K562 (cell line): ENCODE measurements at regions of chr7 and their contacts with region 1.

Region 1: GRCh38 chr7:67705850-67706249 is 709.2 kb downstream of the TYW1 start:
- DNase-seq: no peak
- ATAC-seq: no peak
- H3K4me3 ChIP-seq: no peak overlapping the region
- H3K27ac ChIP-seq: no peak overlapping the region
- H3K4me1 ChIP-seq: no peaks in the 10 kb centered on the region
- H3K27me3 ChIP-seq: no peaks in the 10 kb centered on the region
- CTCF ChIP-seq: no peak
- EP300 ChIP-seq: no peak
- POLR2A ChIP-seq: no peak
- RAD21 ChIP-seq: no peak

Region 2: DNA sequence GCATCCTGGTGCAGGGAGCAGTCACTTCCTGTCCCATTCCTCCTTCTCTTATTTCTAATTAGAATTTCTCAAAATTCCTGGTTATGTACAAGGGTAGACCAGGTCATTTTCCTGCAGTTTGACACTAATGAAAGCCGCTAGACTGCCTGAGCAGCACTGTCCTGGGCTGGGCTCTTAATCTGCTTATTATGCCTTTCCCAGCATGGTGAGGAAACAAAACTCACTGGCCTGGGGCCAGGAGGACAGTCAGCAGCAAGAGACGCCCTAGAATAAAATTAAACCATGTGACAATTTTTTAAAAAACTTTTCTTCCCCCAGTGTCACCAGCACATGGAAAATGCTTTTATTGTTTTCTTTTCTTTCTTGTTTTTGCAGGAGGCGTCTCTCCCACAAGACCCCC is 61.7 kb before region 1 on chr7:
- CTCF ChIA-PET with region 1: no interaction called
- POLR2A ChIA-PET with region 1: no interaction called
- in situ Hi-C with region 1: no loop called
- intact Hi-C with region 1: loop called (anchors 10 kb)
- DNase-seq: no peak
- ATAC-seq: no peak
- H3K4me3 ChIP-seq: no peak overlapping the region
- H3K27ac ChIP-seq: no peak overlapping the region
- H3K4me1 ChIP-seq: no peaks in the 10 kb centered on the region
- H3K27me3 ChIP-seq: no peaks in the 10 kb centered on the region
- CTCF ChIP-seq: no peak
- EP300 ChIP-seq: no peak
- POLR2A ChIP-seq: no peak
- RAD21 ChIP-seq: no peak

Region 3: DNA sequence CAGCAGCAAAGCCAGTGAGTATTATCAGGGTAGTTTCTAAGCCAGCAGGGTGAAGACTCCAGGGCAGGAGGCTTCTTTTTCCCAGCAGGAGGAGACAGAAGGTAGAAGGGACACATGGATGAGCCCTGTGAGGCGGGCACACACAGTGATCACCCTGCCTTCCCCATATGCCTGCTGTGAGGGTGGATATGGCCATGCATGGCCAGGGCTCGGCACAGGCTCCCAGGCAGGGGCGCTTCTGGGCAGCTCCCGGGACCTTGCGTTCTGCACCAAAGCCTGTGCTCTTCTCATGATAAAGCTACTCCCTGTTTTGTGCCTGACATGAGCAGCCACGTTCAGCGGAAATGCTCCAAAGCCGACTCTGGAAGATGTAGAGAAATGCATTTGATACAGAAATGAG is 97.9 kb after region 1 on chr7:
- CTCF ChIA-PET with region 1: no interaction called
- POLR2A ChIA-PET with region 1: no interaction called
- in situ Hi-C with region 1: no loop called
- intact Hi-C with region 1: no loop called
- DNase-seq: no peak
- ATAC-seq: no peak
- H3K4me3 ChIP-seq: no peak overlapping the region
- H3K27ac ChIP-seq: no peak overlapping the region
- H3K4me1 ChIP-seq: no peaks in the 10 kb centered on the region
- H3K27me3 ChIP-seq: peaks cover 0 to 18% of the 10 kb centered on the region in 2 experiments; a peak in 3 of 5 replicates
- CTCF ChIP-seq: no peak
- EP300 ChIP-seq: no peak
- POLR2A ChIP-seq: no peak
- RAD21 ChIP-seq: no peak